ENCODE measurements at regions of chr1 and their contacts with region 1.

Region 1: DNA sequence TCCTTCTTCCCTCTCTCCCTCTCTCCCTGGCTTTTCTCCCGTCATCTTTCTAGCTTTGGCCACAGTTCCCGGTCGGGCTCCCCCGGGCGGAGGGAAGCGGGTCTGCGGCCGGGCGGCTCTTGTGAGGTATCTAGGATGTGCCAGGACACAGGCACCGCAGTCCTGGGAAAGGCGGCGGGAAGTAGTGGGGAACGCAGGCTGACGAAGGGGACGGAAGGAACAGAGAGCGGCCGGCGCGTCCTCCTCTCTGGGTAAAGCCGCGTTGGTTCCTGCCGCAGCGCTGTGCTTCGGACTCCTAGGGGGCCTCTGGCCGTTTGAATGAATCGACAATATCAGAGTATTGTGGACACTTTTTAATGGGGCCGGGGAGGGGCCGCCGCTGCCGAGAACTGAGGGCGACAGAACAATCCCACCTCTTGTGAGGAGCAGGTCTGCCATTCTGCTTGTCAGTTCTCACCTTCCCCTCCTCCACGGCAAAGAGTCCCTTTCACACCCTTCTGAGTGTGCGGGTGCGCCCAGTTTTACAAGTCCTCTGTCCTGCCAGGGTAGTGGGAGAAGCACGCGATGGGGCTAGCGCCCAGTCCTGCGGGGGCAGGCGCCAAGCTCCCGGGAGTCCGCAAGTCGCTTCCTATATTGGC is 1.2 kb upstream of the LHX9 start:
- DNase-seq: no peak
- ATAC-seq: peak; percentile 85
- H3K4me3 ChIP-seq: peak overlapping the region; percentile 49 to 57
- H3K27ac ChIP-seq: no peak overlapping the region
- H3K4me1 ChIP-seq: peaks cover 16% of the 10 kb centered on the region
- H3K27me3 ChIP-seq: peaks cover 40% of the 10 kb centered on the region
- CTCF ChIP-seq: peak; percentile 81

Region 2: DNA sequence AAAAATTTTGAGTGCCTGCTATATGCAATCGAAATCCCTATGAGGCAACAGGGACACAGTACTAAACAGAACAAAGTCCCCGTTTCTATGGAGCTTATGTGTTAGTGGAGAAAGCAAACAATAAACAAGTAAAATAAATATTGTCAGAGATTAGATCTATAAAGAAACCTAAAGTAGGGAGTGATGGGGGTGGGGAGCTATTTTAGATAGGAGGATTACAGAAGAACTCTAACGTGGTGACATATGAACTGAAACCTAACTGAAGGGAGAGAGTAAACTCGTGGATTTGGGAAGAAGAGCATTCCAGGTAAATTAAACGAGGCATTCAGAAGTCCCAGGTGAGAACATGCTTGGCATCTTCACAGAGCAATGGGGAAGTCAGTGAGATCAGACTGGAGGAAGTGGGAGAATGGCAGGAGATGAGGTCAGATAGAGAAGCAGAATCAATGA is 295.2 kb before region 1 on chr1:
- CTCF ChIA-PET with region 1: interaction called, 15 read pairs
- POLR2A ChIA-PET with region 1: no interaction called
- in situ Hi-C with region 1: no loop called
- intact Hi-C with region 1: loop called (anchors 5 kb)
- DNase-seq: no peak
- ATAC-seq: no peak
- H3K4me3 ChIP-seq: no peak overlapping the region
- H3K27ac ChIP-seq: no peak overlapping the region; the same call in 1 of the 2 replicates
- H3K4me1 ChIP-seq: peaks cover 8% of the 10 kb centered on the region; the same call in 1 of the 2 replicates
- H3K27me3 ChIP-seq: no peaks in the 10 kb centered on the region
- CTCF ChIP-seq: no peak

Region 3: GRCh38 chr1:197692965-197693364 is 223.0 kb before region 1 on chr1:
- CTCF ChIA-PET with region 1: no interaction called
- POLR2A ChIA-PET with region 1: no interaction called
- in situ Hi-C with region 1: no loop called
- intact Hi-C with region 1: loop called (anchors 5 kb)
- DNase-seq: no peak
- ATAC-seq: no peak
- H3K4me3 ChIP-seq: no peak overlapping the region
- H3K27ac ChIP-seq: no peak overlapping the region
- H3K4me1 ChIP-seq: no peaks in the 10 kb centered on the region; the same call in 1 of the 2 replicates
- H3K27me3 ChIP-seq: no peaks in the 10 kb centered on the region
- CTCF ChIP-seq: peak; percentile 43; the same call in 1 of the 2 replicates